ENCODE measurements at regions of chr19 and their contacts with region 1.

Region 1: GRCh38 chr19:50461066-50461875 is 15.0 kb upstream of the EMC10 start:
- DNase-seq: peak; percentile 87 to 99
- ATAC-seq: peak; percentile 80 to 87
- H3K4me3 ChIP-seq: no peak overlapping the region
- H3K27ac ChIP-seq: peak overlapping the region; percentile 41 to 74
- H3K4me1 ChIP-seq: peaks cover 16% of the 10 kb centered on the region
- CTCF ChIP-seq: peak; percentile 88
- EP300 ChIP-seq: no peak
- POLR2A ChIP-seq: no peak
- RAD21 ChIP-seq: peak; percentile 85 to 92

Region 2: GRCh38 chr19:50357178-50358100 is 103.8 kb before region 1 on chr19:
- CTCF ChIA-PET with region 1: interaction called, 175 read pairs
- POLR2A ChIA-PET with region 1: no interaction called
- DNase-seq: peak; percentile 68 to 82
- ATAC-seq: peak; percentile 84 to 89
- H3K4me3 ChIP-seq: peak overlapping the region; percentile 48
- H3K27ac ChIP-seq: peak overlapping the region; percentile 73 to 79
- H3K4me1 ChIP-seq: no peaks in the 10 kb centered on the region
- CTCF ChIP-seq: peak; percentile 90
- EP300 ChIP-seq: no peak
- POLR2A ChIP-seq: no peak
- RAD21 ChIP-seq: peak; percentile 90 to 93

Region 3: DNA sequence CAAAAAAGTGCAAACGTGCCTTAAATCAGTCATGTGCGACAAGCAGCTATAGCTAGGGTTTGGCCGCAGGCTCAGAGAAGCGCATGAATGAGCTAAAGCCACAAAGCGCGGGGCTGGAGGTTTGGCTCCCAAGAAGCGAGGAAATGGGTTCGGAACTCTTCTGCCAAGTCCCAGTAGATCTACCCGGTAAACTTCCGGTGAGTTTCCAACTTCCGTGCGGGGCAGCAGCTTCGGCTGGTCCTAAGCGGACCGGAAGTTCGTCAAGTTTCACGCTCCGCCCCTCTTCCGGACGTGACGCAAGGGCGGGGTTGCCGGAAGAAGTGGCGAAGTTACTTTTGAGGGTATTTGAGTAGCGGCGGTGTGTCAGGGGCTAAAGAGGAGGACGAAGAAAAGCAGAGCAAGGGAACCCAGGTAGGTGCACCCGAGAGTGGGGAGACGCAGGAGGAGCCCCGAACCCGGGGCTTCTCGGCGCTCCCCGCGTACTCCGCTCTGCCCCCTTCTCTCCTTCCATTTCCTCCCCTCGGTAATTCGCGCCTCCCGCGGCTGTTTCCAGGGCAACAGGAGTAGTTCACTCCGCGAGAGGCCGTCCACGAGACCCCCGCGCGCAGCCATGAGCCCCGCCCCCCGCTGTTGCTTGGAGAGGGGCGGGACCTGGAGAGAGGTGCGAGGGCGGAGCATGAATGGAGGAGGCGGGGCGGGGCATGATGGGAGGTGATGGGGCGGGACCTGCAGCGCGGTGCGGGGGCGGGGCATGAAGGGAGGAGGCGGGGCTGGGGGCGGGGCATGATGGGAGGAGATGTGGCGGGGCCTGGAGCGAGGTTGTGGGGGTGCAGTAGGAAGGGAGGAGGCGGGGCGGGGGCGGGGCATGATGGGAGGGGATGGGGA is 84.9 kb before region 1 on chr19 and contains the start of gene NR1H2:
- CTCF ChIA-PET with region 1: interaction called, 175 read pairs
- POLR2A ChIA-PET with region 1: interaction called, 7 read pairs
- DNase-seq: peak; percentile 97 to 100
- ATAC-seq: peak; percentile 82 to 93
- H3K4me3 ChIP-seq: peak within 1 kb of the TSS; percentile 79
- H3K27ac ChIP-seq: peak within 1 kb of the TSS; percentile 97
- H3K4me1 ChIP-seq: peaks cover 9% of the 10 kb centered on the region; the same call in 1 of the 3 replicates
- CTCF ChIP-seq: no peak
- EP300 ChIP-seq: no peak
- POLR2A ChIP-seq: peak; percentile 20; the same call in 1 of the 2 replicates
- RAD21 ChIP-seq: no peak
- polyA plus RNA-seq, gene NR1H2: 39.2 and 39.3 TPM in 2 replicates

Region 4: GRCh38 chr19:50414864-50415660 is 46.2 kb before region 1 on chr19:
- CTCF ChIA-PET with region 1: interaction called, 15 read pairs
- POLR2A ChIA-PET with region 1: no interaction called
- DNase-seq: peak; percentile 86 to 89
- ATAC-seq: peak; percentile 67 to 89
- H3K4me3 ChIP-seq: no peak overlapping the region
- H3K27ac ChIP-seq: no peak overlapping the region
- H3K4me1 ChIP-seq: no peaks in the 10 kb centered on the region
- CTCF ChIP-seq: peak; percentile 82
- EP300 ChIP-seq: no peak
- POLR2A ChIP-seq: no peak
- RAD21 ChIP-seq: peak; percentile 52 to 59; a peak in 4 of 5 replicates

Region 5: DNA sequence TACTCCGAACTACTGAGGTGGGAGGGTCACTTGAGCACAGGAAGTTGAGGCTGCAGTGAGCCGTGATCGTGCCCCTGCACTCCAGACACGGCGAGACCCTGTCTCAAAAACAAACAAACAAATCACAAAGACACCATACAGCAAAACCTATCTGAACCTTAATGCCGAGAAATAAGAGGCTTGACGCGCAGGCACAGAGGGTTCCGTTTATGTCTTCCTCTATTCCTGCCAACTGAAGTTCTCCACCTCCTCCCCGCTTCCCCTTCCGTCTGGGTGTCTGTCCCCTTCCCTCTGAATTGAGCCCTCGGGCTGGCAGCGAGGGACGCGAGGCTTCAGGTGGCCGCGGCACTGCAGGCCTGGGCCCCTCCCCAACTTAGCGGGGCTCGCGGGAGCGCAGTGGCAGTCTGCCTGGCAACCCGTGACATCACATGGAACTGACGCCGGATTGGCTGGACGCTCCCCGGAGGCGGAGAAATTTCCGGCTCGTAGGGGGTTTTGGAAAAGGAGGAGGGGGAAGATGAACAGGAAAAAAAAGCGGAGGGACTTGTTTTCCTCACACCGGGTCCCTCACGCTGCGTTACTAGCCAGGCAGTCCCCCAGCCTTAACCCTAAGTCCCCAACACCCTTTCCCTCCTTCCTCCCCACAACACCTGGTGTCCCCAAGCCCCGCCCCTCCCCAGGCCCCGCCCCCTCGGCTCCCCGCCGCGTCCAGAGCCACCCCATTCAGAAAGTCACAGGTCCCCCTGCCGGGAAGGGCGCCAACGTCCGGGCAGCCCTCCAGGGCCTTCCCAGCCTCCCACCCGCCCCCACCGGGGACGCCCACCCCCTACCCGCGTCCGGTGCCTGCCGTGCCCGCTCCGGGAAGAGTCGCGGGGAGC is 29.7 kb before region 1 on chr19:
- CTCF ChIA-PET with region 1: interaction called, 19 read pairs
- POLR2A ChIA-PET with region 1: no interaction called
- DNase-seq: peak; percentile 72 to 90
- ATAC-seq: peak; percentile 83 to 95
- H3K4me3 ChIP-seq: peak overlapping the region; percentile 67
- H3K27ac ChIP-seq: peak overlapping the region; percentile 65 to 88
- H3K4me1 ChIP-seq: peaks cover 11% of the 10 kb centered on the region
- CTCF ChIP-seq: no peak
- EP300 ChIP-seq: no peak
- POLR2A ChIP-seq: no peak
- RAD21 ChIP-seq: no peak

Region 6: DNA sequence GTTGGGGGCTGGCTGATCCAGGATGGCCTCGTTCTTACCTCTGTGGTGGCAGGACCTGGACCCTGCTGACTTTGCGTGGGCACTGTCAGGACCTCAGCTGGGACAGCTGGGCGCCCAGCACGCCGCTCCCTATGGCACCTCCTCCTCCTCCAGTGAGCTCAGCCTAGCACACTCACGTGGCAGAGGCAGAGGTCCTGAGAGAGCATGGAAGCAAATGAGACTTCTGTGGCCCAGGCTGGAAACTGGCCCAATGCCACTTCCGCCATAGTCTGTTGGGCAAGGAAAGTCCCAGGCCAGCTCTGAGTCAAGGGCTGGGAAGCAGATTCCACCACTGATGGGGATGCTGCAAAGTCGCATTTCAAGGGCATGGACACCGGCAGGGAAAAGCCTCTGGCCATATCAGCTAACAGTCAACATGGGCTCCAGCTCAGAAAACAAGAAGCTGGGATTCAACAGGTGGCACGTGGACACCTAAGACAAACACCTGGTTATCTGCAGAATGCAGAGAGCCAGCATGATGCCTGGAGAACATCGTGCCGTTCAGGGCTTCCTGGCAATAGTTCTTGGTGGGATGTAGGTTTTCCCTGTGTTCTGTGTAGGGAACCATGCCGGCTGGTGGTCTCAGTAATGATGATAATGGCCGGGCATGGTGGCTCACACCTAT is 11.9 kb before region 1 on chr19:
- CTCF ChIA-PET with region 1: interaction called, 25 read pairs
- POLR2A ChIA-PET with region 1: no interaction called
- DNase-seq: peak in 1 of 2 experiments; percentile 38
- ATAC-seq: peak; percentile 28 to 34; a peak in 2 of 6 replicates
- H3K4me3 ChIP-seq: no peak overlapping the region
- H3K27ac ChIP-seq: no peak overlapping the region
- H3K4me1 ChIP-seq: no peaks in the 10 kb centered on the region
- CTCF ChIP-seq: no peak
- EP300 ChIP-seq: no peak
- POLR2A ChIP-seq: no peak
- RAD21 ChIP-seq: no peak

Region 7: GRCh38 chr19:50486823-50487511 is 25.7 kb after region 1 on chr19:
- CTCF ChIA-PET with region 1: interaction called, 12 read pairs
- POLR2A ChIA-PET with region 1: no interaction called
- DNase-seq: peak in 1 of 2 experiments; percentile 92
- ATAC-seq: peak in 1 of 2 experiments; percentile 52; a peak in 3 of 6 replicates
- H3K4me3 ChIP-seq: no peak overlapping the region
- H3K27ac ChIP-seq: no peak overlapping the region
- H3K4me1 ChIP-seq: peaks cover 4% of the 10 kb centered on the region; the same call in 2 of the 3 replicates
- CTCF ChIP-seq: peak; percentile 50
- EP300 ChIP-seq: no peak
- POLR2A ChIP-seq: no peak
- RAD21 ChIP-seq: peak in 1 of 2 experiments; percentile 43; a peak in 2 of 5 replicates

Region 8: DNA sequence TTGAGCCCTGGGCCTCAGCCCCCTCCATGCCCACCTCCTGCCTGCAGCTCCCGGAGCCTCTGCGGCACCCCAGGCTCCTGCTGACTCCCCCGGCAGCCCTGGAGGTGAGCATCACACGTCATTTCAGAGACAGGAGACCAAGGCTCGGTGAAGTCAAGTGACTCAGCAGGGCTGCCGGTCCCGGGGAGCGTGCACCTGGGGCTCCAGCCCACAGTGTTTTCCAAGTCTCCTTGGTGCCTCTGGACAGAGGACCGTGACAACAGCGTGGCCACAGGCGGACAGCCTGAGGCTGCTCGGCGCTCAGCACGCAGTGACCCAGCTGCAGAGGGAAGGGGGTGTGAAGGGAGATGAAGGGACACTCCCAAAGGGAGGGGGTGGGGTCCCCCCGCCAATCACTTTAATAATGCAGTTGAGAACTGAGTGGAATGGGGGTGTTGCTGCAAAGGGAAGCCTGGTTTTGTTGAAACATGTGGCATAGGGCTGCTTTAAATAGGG is 69.9 kb after region 1 on chr19:
- CTCF ChIA-PET with region 1: no interaction called
- POLR2A ChIA-PET with region 1: no interaction called
- DNase-seq: no peak
- ATAC-seq: peak; percentile 21 to 29; a peak in 2 of 6 replicates
- H3K4me3 ChIP-seq: no peak overlapping the region
- H3K27ac ChIP-seq: no peak overlapping the region
- H3K4me1 ChIP-seq: 0 out of 3 replicates have a peak, but pooled peaks cover 3% of the 10 kb centered on the region
- CTCF ChIP-seq: no peak
- EP300 ChIP-seq: no peak
- POLR2A ChIP-seq: no peak
- RAD21 ChIP-seq: no peak

Region 9: DNA sequence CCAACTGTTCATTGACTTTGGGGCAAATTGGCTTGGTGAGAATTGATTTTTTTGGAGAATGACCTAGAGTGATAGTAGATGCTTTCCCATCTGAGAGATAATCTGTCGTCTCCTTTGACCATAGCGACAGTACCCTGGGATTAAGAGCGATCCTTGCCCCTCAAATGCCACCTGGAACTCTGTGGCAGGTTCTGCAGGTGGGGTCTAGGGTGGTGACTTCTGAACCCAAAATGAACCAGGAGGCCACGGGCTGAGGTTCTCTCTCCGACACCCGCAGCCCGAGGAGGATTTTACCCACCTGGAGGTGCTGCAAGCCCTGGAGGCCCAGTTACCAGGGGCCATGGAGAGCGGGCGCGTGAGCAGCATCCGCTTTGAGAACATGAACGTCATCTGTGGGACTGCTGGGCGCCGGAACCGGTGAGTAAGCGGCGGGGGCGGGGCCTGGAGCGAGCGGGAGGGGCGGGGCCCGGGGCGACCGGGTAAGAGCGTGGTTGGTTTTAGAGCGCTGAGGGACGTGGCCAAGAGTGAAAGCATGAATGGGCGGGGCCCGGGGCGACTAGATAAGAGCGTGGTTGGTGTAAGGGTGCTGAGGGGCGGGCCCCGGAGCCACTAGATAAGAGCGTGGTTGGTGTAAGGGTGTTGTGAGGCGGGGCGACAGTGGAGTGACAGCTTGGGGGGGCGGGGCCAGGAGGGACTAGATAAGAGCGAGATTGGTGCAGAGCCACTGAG is 196.6 kb after region 1 on chr19:
- CTCF ChIA-PET with region 1: no interaction called
- POLR2A ChIA-PET with region 1: no interaction called
- DNase-seq: peak; percentile 97 to 100
- ATAC-seq: peak; percentile 82 to 94
- H3K4me3 ChIP-seq: peak overlapping the region; percentile 62
- H3K27ac ChIP-seq: peak overlapping the region; percentile 72 to 94
- H3K4me1 ChIP-seq: peaks cover 14% of the 10 kb centered on the region; the same call in 2 of the 3 replicates
- CTCF ChIP-seq: no peak
- EP300 ChIP-seq: no peak
- POLR2A ChIP-seq: peak; percentile 84
- RAD21 ChIP-seq: no peak